Transverse colon (tissue), 4 donors: ENCODE measurements at regions of chr1 and their contacts with region 1.

Region 1: DNA sequence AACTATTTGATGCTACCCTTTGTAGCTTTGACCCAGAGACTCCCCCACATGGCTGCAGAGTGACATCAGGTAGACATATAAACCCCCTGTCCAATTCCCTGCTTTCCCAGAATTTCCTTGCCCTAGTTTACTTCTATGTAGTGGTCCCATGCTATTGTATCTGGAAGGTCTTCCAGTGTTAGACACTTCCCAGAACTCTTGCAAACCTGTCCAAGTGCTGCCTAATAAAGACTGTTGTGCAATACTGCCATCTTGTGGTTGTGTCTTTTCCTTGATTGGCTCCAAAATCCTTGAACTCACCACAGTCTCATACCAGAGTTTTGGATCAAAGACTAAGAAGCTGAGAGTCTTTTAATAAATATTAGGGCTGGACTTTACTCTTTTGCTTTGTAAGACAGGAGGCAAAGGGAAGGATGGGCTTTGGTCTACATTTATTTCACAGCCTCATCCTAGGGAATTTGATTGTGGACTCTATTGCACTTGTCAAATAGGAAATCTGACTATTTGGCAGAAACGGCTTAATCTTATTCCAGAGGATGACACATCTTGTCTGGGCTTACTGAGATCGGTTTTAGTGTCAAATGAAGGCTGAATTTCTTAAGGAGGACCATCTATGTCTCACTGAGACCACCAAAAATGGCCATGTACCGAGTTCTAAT is 169.9 kb downstream of the LRRC7 start:
- DNase-seq: no peak
- H3K4me3 ChIP-seq: no peak overlapping the region
- H3K27ac ChIP-seq: no peak overlapping the region
- H3K4me1 ChIP-seq: no peaks in the 10 kb centered on the region
- H3K27me3 ChIP-seq: no peaks in the 10 kb centered on the region
- CTCF ChIP-seq: peak; percentile 51 to 63 (median 59)
- EP300 ChIP-seq: no peak
- POLR2A ChIP-seq: no peak

Region 2: GRCh38 chr1:68470388-68470970 is 1267.2 kb before region 1 on chr1:
- in situ Hi-C with region 1: loop called in 1 of 4 experiments (anchors 25 kb)
- intact Hi-C with region 1: no loop called
- DNase-seq: no peak
- H3K4me3 ChIP-seq: no peak overlapping the region
- H3K27ac ChIP-seq: no peak overlapping the region
- H3K4me1 ChIP-seq: no peaks in the 10 kb centered on the region
- H3K27me3 ChIP-seq: no peaks in the 10 kb centered on the region
- CTCF ChIP-seq: peak in 4 of 5 experiments; percentile 37 to 58 (median 40)
- EP300 ChIP-seq: no peak
- POLR2A ChIP-seq: no peak

Region 3: DNA sequence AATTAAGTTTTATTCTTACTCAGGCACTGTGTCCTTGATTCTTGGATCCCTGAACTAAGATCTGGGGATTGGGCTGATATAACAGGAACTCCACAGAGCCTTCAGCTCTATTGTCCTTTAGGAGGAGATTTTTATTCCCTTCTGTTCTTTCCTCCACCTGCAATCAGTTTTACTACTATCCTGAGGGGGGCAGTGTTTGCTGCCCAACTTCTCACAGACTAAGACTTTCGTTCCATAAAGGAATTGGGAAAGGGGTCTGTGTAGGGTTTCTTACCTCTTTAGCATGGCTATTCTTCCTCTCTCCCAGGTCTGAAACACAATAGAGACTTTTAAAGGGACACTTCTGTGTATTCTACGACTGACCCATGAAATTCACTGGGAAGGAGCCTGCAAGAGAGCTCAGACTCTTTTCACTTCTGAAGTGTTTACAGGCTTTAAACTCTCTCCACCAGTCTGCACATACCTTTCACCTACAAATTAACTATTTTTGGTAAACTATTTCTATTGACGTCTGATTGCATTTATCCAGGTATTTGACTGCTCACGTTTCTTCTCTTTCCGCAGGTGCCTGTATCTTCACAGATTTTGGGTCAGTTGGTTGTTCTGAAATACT is 1137.5 kb before region 1 on chr1:
- in situ Hi-C with region 1: loop called in 1 of 4 experiments (anchors 25 kb)
- intact Hi-C with region 1: no loop called
- DNase-seq: no peak
- H3K4me3 ChIP-seq: peak overlapping the region in 1 of 4 donors; percentile 29
- H3K27ac ChIP-seq: no peak overlapping the region
- H3K4me1 ChIP-seq: peaks cover 0 to 4% (median 0%) of the 10 kb centered on the region in 4 donors
- H3K27me3 ChIP-seq: no peaks in the 10 kb centered on the region
- CTCF ChIP-seq: peak; percentile 28 to 56 (median 45)
- EP300 ChIP-seq: no peak
- POLR2A ChIP-seq: no peak

Region 4: GRCh38 chr1:69585666-69586065 is 152.0 kb before region 1 on chr1:
- in situ Hi-C with region 1: no loop called
- intact Hi-C with region 1: no loop called
- DNase-seq: no peak
- H3K4me3 ChIP-seq: no peak overlapping the region
- H3K27ac ChIP-seq: no peak overlapping the region
- H3K4me1 ChIP-seq: no peaks in the 10 kb centered on the region
- H3K27me3 ChIP-seq: no peaks in the 10 kb centered on the region
- CTCF ChIP-seq: no peak
- EP300 ChIP-seq: no peak
- POLR2A ChIP-seq: no peak